ENCODE measurements at regions of chr4 and their contacts with region 1.

Region 1: DNA sequence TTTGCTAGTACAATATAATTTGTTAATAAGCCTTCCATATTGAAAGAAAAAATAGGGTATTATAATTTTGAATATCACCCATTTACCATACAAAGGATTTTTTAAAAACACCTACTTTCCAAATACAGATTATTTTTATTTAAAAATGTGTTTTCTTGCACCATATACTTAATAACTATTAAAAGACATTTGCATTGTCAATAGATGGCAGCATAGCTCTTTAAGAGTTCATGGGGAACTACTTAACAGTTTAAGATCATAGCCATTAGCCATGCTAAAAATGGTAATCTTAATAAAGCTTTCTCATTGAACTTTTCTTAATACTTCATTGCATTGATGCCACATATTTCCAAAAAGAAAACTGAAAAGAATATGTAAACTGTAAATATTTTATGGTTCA is 1995.9 kb downstream of the C4orf33 start:
- DNase-seq: peak in 1 of 4 experiments; percentile 11
- ATAC-seq: no peak
- H3K4me3 ChIP-seq: no peak overlapping the region
- H3K27ac ChIP-seq: no peak overlapping the region
- H3K4me1 ChIP-seq: no peaks in the 10 kb centered on the region
- H3K27me3 ChIP-seq: no peaks in the 10 kb centered on the region
- CTCF ChIP-seq: peak in 1 of 3 experiments; percentile 20; a peak in 1 of 6 replicates
- EP300 ChIP-seq: no peak
- POLR2A ChIP-seq: no peak
- RAD21 ChIP-seq: peak; percentile 37 to 40

Region 2: GRCh38 chr4:132642016-132642817 is 1550.3 kb after region 1 on chr4:
- CTCF ChIA-PET with region 1: no interaction called
- POLR2A ChIA-PET with region 1: no interaction called
- in situ Hi-C with region 1: no loop called
- intact Hi-C with region 1: loop called (anchors 5 kb)
- DNase-seq: peak; percentile 10 to 21 (median 13)
- ATAC-seq: no peak
- H3K4me3 ChIP-seq: no peak overlapping the region
- H3K27ac ChIP-seq: no peak overlapping the region
- H3K4me1 ChIP-seq: no peaks in the 10 kb centered on the region
- H3K27me3 ChIP-seq: no peaks in the 10 kb centered on the region
- CTCF ChIP-seq: peak in 2 of 3 experiments; percentile 39 to 44; a peak in 4 of 6 replicates
- EP300 ChIP-seq: no peak
- POLR2A ChIP-seq: no peak
- RAD21 ChIP-seq: peak in 1 of 2 experiments; percentile 46; a peak in 2 of 4 replicates

Measured in K562 (cell line).